Head of caudate nucleus (tissue), 42 donors: ENCODE measurements at regions of chr1 and their contacts with region 1.

Region 1: GRCh38 chr1:203216274-203217138 is 13.0 kb downstream of the CHIT1 start:
- DNase-seq: peak in 41 of 42 donors; percentile 18 to 89 (median 70)

Region 2: DNA sequence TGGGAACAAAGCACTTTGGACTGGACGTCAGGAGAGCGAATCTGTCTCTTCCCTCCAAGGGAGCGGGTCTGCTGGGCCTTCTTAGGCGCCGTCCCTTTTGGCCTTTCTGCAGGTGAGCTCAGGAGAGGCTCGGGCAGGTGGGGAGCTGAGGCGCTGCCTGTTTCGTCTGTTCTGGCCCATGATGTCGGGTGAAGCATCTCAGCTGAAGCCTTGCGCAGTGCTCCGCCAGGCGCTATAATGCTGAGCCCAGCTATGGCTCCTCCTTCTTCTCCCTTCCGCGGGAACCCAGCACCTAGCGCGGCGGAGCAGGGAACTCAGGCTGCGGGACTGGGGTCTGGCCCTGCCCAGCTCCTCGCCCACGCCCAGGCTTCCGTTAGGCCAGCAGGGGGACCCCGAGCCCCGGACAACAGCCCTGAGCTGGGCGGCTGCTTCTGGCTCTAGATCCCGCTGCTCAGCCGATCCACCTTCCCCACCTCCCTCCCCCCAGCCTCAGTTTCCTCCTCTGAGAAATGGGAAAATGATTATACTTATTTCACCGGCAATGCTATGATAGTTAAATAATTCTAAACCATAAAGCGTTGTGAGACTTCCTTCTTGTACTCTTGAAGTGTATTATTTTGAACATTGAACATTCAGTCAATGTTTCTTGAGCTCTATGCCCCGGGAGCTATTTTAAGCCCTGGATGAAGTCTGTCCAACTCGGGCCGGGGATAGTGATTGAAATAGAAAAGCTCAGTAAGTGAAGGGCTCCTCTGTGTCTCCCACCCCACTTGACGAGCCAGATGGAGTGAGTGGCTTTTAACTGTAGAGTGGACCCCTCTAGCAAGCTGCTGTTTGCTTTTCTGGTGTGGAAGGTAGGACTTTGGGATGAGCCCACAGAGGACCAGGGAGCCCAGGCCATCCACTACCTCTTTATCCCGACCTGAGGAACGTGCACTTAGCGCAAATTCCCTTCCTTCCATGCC is 98.6 kb before region 1 on chr1:
- intact Hi-C with region 1: loop called (anchors 2 kb)
- DNase-seq: peak in 41 of 42 donors; percentile 52 to 93 (median 80)

Region 3: GRCh38 chr1:203133970-203134725 is 82.4 kb before region 1 on chr1:
- intact Hi-C with region 1: no loop called
- DNase-seq: peak in 32 of 42 donors; percentile 51 to 94 (median 72)